ENCODE measurements at regions of chr11 and their contacts with region 1.

Region 1: DNA sequence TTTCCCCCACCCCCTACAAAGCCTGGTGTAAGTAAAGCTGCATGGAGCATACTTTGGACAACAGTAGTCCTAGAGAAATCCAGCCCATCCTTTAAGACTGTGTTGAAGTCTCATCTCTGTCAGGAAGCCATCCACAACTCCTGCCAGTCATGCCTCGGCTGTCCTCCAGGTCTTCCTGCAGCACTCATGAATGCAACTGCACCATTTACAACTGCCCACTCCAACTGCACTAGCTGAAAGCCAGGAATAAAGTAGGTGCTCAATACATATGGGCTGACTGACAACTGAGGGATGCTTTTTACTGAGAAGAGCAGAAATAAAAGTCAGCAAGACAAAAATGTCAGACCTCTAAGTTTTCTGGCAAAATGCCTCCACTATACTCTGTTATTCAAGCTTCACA is 27.4 kb downstream of the IL18BP start:
- DNase-seq: no peak
- H3K4me3 ChIP-seq: no peak overlapping the region
- H3K27ac ChIP-seq: peak overlapping the region; percentile 66 to 79 (median 71)
- H3K4me1 ChIP-seq: peaks cover 46 to 76% (median 71%) of the 10 kb centered on the region in 4 donors
- H3K27me3 ChIP-seq: no peaks in the 10 kb centered on the region
- CTCF ChIP-seq: no peak
- EP300 ChIP-seq: no peak
- POLR2A ChIP-seq: no peak

Region 2: DNA sequence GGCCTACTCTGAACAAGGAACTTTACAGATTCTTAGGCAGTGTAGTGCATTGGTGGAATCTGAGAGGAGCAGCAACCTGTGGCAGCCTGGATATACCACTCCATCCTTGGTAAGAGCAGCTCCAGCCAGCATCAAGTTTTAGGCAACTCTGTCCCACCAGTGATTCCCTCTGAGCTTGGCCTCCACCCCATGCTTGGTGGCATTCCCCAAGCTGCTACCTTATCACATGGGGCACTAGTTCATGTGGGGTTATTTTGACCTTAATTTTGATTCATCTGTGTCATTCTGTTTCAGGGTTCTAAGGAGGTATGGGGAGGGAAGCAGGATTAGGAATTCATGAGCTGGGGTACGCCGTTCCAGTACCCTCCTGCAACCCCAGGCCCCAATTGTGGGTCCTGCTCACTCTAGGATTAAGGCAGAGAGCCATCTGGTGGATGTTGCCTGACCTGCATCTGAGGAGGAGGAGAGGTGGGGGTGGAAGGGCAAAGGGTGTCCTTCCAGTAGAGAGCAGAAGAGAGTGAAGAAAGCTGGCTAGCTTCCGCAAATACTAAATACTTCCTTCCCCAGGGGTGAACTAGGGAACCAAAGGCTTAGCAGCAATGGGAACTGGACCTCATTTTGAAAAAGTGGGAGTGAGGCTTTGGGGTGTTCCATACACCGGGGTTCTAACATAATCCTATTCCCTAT is 65.1 kb after region 1 on chr11:
- intact Hi-C with region 1: loop called (anchors 2 kb)
- DNase-seq: no peak
- H3K4me3 ChIP-seq: no peak overlapping the region
- H3K27ac ChIP-seq: peak overlapping the region; percentile 48 to 69 (median 56)
- H3K4me1 ChIP-seq: peaks cover 10 to 15% (median 12%) of the 10 kb centered on the region in 4 donors
- H3K27me3 ChIP-seq: no peaks in the 10 kb centered on the region
- CTCF ChIP-seq: peak; percentile 89 to 95 (median 94)
- EP300 ChIP-seq: no peak
- POLR2A ChIP-seq: no peak

Region 3: DNA sequence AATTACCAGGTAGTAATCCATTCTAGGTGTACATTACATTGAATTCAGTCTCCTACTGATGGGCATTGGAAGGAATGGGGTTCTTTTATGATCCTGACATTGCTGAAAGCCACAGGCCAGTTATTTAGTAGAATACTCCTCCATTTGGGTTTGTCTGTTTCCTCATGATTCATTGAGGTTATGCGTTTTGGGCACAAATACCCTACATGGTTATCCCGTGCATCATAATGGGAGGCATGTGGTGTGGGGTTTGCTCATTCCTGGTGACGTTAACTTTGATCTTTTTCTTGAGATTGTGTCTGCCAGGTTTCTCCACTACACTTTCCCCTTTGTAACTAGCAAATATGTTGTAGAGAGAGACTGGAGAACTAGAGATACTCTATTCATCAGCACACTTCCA is 115.0 kb after region 1 on chr11:
- intact Hi-C with region 1: loop called (anchors 5 kb)
- DNase-seq: no peak
- H3K4me3 ChIP-seq: no peak overlapping the region
- H3K27ac ChIP-seq: no peak overlapping the region
- H3K4me1 ChIP-seq: peaks cover 0 to 3% (median 0%) of the 10 kb centered on the region in 4 donors
- H3K27me3 ChIP-seq: no peaks in the 10 kb centered on the region
- CTCF ChIP-seq: no peak
- EP300 ChIP-seq: no peak
- POLR2A ChIP-seq: no peak

Region 4: GRCh38 chr11:72179804-72180396 is 153.8 kb after region 1 on chr11:
- intact Hi-C with region 1: no loop called
- DNase-seq: no peak
- H3K4me3 ChIP-seq: no peak overlapping the region
- H3K27ac ChIP-seq: no peak overlapping the region
- H3K4me1 ChIP-seq: peaks cover 0 to 5% (median 0%) of the 10 kb centered on the region in 4 donors
- H3K27me3 ChIP-seq: no peaks in the 10 kb centered on the region
- CTCF ChIP-seq: no peak
- EP300 ChIP-seq: no peak
- POLR2A ChIP-seq: no peak